ENCODE measurements at regions of chr12 and their contacts with region 1.

Region 1: DNA sequence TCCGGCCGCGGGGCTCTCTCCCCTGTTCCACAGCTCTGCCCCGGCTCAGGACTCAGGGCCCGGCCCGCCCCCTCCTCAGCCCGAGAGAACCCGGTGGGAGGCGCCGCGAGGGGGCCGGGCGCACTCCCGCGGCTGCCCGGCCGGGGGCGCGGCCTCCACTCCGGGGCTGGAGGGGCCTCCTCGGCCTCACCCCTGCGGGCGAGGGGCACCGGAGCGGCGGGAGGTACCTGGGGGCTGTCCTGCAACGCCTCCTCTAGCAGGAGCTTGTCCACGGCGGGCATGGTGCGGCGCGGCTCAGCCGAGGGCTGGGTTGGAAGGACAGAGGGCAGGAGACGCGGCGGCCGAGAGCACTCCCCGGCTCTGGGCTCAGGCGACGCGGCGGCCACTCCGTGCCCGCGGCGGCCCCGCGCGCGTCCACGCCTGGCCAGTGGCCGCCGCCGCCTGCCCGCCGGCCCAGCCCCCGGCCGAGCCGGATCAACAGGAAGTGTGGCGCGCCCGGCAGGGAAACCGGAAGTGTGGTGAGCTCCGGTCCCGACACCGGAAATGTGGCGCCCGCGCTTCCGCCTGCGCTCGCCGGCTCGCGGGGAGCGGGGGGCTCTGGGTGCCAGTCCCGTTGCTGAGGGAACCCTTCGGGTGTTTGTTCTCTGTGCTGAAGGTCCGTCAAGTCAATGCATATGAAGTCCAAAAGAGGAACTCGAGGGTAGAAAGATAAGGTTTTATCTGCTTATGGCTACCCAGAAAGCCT is at the start of gene APPL2:
- DNase-seq: peak; percentile 92
- ATAC-seq: peak; percentile 81
- H3K4me3 ChIP-seq: peak within 1 kb of the TSS; percentile 51 to 90 (median 71)
- H3K4me3 Mint-ChIP-seq: peak within 1 kb of the TSS; percentile 95
- H3K27ac ChIP-seq: peak within 1 kb of the TSS; percentile 70 to 95
- H3K27ac Mint-ChIP-seq: peak within 1 kb of the TSS; percentile 94
- H3K4me1 ChIP-seq: peaks cover 44 to 49% of the 10 kb centered on the region in 2 donors
- H3K4me1 Mint-ChIP-seq: peaks cover 38% of the 10 kb centered on the region
- H3K27me3 ChIP-seq: no peaks in the 10 kb centered on the region
- H3K27me3 Mint-ChIP-seq: no peaks in the 10 kb centered on the region
- CTCF ChIP-seq: peak; percentile 66
- total RNA-seq, gene APPL2: 57.7 and 58.3 TPM in 2 replicates

Region 2: GRCh38 chr12:105317942-105318621 is 82.2 kb after region 1 on chr12:
- CTCF ChIA-PET with region 1: no interaction called
- POLR2A ChIA-PET with region 1: no interaction called
- intact Hi-C with region 1: no loop called
- DNase-seq: no peak
- ATAC-seq: no peak
- H3K4me3 ChIP-seq: no peak overlapping the region
- H3K4me3 Mint-ChIP-seq: no peak overlapping the region
- H3K27ac ChIP-seq: no peak overlapping the region
- H3K27ac Mint-ChIP-seq: no peak overlapping the region
- H3K4me1 ChIP-seq: no peaks in the 10 kb centered on the region
- H3K4me1 Mint-ChIP-seq: no peaks in the 10 kb centered on the region
- H3K27me3 ChIP-seq: no peaks in the 10 kb centered on the region
- H3K27me3 Mint-ChIP-seq: no peaks in the 10 kb centered on the region
- CTCF ChIP-seq: no peak

Region 3: GRCh38 chr12:105330283-105330930 is 94.5 kb after region 1 on chr12 and contains the start of gene C12orf75:
- CTCF ChIA-PET with region 1: interaction called, 4 read pairs
- POLR2A ChIA-PET with region 1: interaction called, 4 read pairs
- intact Hi-C with region 1: loop called (anchors 2 kb)
- DNase-seq: peak; percentile 89
- ATAC-seq: peak; percentile 93
- H3K4me3 ChIP-seq: peak within 1 kb of the TSS; percentile 25 to 78 (median 69)
- H3K4me3 Mint-ChIP-seq: peak within 1 kb of the TSS; percentile 92
- H3K27ac ChIP-seq: peak within 1 kb of the TSS; percentile 52 to 69
- H3K27ac Mint-ChIP-seq: peak within 1 kb of the TSS; percentile 86
- H3K4me1 ChIP-seq: peaks cover 27 to 38% of the 10 kb centered on the region in 2 donors
- H3K4me1 Mint-ChIP-seq: peaks cover 44% of the 10 kb centered on the region
- H3K27me3 ChIP-seq: no peaks in the 10 kb centered on the region
- H3K27me3 Mint-ChIP-seq: no peaks in the 10 kb centered on the region
- CTCF ChIP-seq: no peak
- total RNA-seq, gene C12orf75: 7.9 and 12.9 TPM in 2 replicates

Region 4: DNA sequence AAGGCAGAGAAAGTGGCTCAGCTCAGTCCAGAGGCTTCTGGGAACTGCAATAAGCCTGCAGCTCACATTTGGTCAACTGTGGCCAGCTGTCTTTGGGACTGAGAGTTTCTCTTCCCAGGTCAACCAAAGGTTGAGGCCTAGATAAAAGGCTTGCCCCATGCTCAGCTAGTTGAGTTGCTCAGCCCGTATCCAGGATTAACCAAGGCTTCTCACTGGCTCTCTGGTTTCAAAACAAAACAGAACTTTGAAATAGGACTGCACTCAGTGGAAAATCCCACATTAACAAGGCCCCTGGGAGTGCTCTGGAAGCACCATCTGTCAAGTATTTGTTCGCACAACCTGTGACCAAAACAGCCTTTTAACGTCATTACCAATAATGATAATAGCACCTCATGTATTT is 943.2 kb after region 1 on chr12:
- CTCF ChIA-PET with region 1: no interaction called
- POLR2A ChIA-PET with region 1: no interaction called
- intact Hi-C with region 1: no loop called
- DNase-seq: no peak
- ATAC-seq: no peak
- H3K4me3 ChIP-seq: no peak overlapping the region
- H3K4me3 Mint-ChIP-seq: no peak overlapping the region
- H3K27ac ChIP-seq: no peak overlapping the region
- H3K27ac Mint-ChIP-seq: no peak overlapping the region
- H3K4me1 ChIP-seq: no peaks in the 10 kb centered on the region
- H3K4me1 Mint-ChIP-seq: no peaks in the 10 kb centered on the region
- H3K27me3 ChIP-seq: no peaks in the 10 kb centered on the region
- H3K27me3 Mint-ChIP-seq: peaks cover 19% of the 10 kb centered on the region
- CTCF ChIP-seq: no peak